Sciatic nerve (tissue), 2 donors: ENCODE measurements at regions of chr17 and their contacts with region 1.

Region 1: GRCh38 chr17:15659663-15660062 is 24.4 kb downstream of the TRIM16 start:
- DNase-seq: no peak
- ATAC-seq: no peak

Region 2: DNA sequence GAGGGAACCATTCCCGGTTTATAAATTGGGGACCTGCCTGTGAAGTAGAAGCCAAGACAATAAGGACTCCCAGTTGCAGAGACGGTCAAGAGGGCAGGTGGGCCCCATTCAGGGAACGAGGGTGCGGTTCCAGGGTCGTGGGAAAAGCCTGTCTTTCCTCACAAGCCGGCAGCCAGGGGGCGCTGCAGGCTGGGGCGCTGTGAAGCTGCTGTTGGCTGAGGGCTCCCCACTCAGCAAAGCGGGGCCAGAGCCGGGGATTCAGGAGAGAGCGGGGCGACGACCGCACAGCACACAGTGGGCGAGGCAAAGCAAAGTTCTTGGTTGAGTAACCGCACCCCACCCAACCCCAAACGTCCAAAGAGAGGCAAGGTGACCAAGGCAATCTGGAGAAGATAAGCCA is 1447.9 kb before region 1 on chr17:
- intact Hi-C with region 1: loop called (anchors 5 kb)
- DNase-seq: no peak
- ATAC-seq: no peak